Body of pancreas (tissue), 4 donors: ENCODE measurements at regions of chr12 and their contacts with region 1.

Region 1: DNA sequence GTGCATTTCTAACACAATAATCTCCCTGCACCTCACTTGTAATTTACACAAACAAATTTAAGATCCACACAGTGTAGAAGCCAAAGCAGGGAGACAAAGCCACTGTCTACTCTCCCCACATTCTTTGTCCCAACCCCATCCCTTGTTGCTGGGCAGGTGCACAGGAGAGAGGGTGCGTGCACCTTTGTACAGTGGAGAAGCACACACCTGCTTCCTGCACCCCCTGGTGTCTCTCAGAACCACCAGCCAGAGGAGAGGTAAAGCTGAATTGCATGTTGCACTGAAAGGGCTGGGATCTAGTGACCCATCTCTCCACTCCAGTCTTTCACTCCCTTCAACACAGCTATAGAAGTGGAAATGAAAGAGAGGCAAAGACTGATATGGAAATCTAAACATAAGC is 51.4 kb upstream of the IFNG-AS1 start:
- DNase-seq: no peak
- ATAC-seq: no peak
- H3K4me3 ChIP-seq: no peak overlapping the region
- H3K27ac ChIP-seq: no peak overlapping the region
- H3K4me1 ChIP-seq: peaks cover 12% of the 10 kb centered on the region
- H3K27me3 ChIP-seq: no peaks in the 10 kb centered on the region
- CTCF ChIP-seq: no peak
- POLR2A ChIP-seq: no peak

Region 2: DNA sequence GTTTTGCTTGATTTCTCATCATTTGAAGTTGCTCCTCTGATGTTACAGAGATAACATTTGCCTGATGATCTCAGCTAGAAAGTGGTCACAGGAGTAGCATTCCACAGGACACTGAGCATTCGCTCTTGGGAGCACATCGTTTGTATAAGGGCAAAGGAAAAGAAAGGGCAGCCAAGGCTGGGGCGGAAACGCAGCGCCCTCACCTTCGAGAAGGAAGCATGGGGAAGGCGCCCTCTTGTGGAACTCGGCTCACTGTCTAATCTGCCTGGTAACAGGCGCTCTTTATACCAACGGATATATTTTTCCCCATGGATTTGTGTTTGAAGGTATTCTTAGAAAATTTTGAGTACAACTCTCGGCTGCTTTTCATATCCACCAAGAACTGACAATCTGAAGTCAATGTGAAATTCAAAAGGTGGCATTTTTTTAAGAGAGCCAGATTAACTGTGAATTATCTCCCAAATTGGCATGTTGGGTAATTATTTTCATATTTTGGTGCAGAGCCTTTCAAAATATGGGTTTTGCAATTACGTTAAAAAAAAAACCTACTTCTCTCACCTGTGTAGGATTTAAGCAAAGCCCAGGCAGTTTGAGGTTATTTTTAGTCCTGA is 496.0 kb before region 1 on chr12:
- intact Hi-C with region 1: loop called (anchors 10 kb)
- DNase-seq: peak; percentile 90 to 95 (median 92)
- ATAC-seq: peak; percentile 96
- H3K4me3 ChIP-seq: no peak overlapping the region
- H3K27ac ChIP-seq: peak overlapping the region in 2 of 4 donors; percentile 2 to 18
- H3K4me1 ChIP-seq: peaks cover 14% of the 10 kb centered on the region
- H3K27me3 ChIP-seq: no peaks in the 10 kb centered on the region
- CTCF ChIP-seq: peak; percentile 66 to 95 (median 90)
- POLR2A ChIP-seq: no peak

Region 3: DNA sequence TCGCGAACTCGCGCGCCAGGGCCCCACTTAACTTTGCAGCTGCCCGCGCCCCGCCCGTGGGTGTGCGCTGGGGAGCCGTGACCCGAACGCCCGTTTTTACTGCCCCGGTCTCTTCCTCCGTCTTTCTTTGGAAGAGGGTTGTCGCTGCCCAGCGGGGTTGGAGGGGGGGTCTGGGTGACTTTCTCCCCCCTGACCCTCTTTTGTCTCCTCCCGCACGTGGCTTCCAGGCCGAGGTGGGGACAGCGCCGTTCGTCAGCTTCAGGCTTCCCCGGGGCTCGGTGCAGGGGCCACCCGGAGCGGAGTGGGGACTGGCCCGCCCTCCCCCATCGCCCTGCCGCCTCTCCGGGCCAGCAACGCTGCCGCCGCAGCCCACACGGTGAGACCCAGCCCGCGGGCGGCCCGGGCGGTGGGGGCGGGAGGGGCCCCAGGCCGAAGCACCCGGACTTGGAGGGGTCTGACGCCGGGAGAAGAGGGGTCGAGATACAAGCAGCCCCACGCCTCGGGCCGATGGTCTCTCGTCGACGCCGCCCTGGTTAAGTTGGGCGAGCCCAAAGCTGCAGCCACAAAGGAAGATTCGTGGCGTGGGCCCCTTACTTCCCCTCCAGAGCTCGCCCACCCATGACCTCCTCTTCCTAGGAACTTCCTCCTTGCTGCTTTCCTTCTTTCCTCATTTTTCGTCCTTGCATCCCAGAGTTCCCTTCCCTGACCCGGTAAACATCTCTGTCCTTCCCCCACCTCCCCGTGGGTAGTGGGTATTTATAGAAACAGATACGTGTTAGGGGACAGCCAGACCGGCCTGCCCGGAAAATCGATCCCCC is 288.1 kb before region 1 on chr12:
- intact Hi-C with region 1: loop called (anchors 10 kb)
- DNase-seq: peak; percentile 41 to 56 (median 42)
- ATAC-seq: peak; percentile 7
- H3K4me3 ChIP-seq: peak overlapping the region; percentile 83 to 91
- H3K27ac ChIP-seq: peak overlapping the region; percentile 72 to 99 (median 96)
- H3K4me1 ChIP-seq: peaks cover 22% of the 10 kb centered on the region
- H3K27me3 ChIP-seq: no peaks in the 10 kb centered on the region
- CTCF ChIP-seq: no peak
- POLR2A ChIP-seq: peak in 1 of 3 donors; percentile 37

Region 4: DNA sequence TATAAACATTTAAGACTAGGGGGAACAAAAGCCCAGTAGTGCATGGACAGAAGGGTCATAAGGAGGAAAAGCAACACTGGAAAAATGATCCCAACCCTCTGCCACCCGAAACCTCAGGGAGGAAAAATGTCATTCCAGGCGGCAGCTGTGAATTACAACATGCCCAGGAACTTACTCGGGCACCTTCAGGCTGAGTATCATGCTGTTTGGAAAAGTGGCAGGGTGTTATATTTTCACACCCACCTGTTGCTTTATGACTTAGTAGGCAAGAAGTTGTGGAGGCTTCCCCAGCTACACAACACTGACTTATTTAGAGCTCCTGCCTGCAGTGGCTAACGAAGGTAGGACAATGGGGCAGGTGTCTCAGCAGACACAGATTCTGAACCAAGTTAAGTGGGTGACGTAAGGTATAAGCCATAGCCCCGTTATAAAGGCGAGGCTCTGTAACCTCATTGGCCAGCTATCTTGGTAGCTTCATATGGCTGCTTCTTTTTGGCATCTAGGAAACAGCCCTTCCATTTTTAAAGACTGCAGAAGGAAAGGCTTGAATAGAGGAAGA is 44.7 kb before region 1 on chr12:
- intact Hi-C with region 1: no loop called
- DNase-seq: no peak
- ATAC-seq: no peak
- H3K4me3 ChIP-seq: no peak overlapping the region
- H3K27ac ChIP-seq: no peak overlapping the region
- H3K4me1 ChIP-seq: no peaks in the 10 kb centered on the region
- H3K27me3 ChIP-seq: no peaks in the 10 kb centered on the region
- CTCF ChIP-seq: no peak
- POLR2A ChIP-seq: no peak

Region 5: GRCh38 chr12:69225251-69225910 is 1287.5 kb after region 1 on chr12:
- intact Hi-C with region 1: no loop called
- DNase-seq: no peak
- ATAC-seq: no peak
- H3K4me3 ChIP-seq: no peak overlapping the region
- H3K27ac ChIP-seq: no peak overlapping the region
- H3K4me1 ChIP-seq: no peaks in the 10 kb centered on the region
- H3K27me3 ChIP-seq: no peaks in the 10 kb centered on the region
- CTCF ChIP-seq: no peak
- POLR2A ChIP-seq: no peak